CD4-positive, alpha-beta memory T cell (primary cell): ENCODE measurements at regions of chr16 and their contacts with region 1.

Region 1: GRCh38 chr16:401468-402348 is at the start of gene DECR2:
- DNase-seq: peak; percentile 92 to 96 (median 94)
- H3K4me3 ChIP-seq: peak within 1 kb of the TSS; percentile 61 to 68
- H3K4me3 Mint-ChIP-seq: peak within 1 kb of the TSS; percentile 88 to 94 (median 89)
- H3K27ac ChIP-seq: peak within 1 kb of the TSS; percentile 79
- H3K27ac Mint-ChIP-seq: peak within 1 kb of the TSS; percentile 88 to 96 (median 95)
- H3K4me1 ChIP-seq: peaks cover 13% of the 10 kb centered on the region
- H3K4me1 Mint-ChIP-seq: peaks cover 6 to 25% (median 11%) of the 10 kb centered on the region in 4 donors
- H3K27me3 ChIP-seq: no peaks in the 10 kb centered on the region
- H3K27me3 Mint-ChIP-seq: no peaks in the 10 kb centered on the region
- total RNA-seq, gene DECR2: 5.1 to 7.3 TPM

Region 2: DNA sequence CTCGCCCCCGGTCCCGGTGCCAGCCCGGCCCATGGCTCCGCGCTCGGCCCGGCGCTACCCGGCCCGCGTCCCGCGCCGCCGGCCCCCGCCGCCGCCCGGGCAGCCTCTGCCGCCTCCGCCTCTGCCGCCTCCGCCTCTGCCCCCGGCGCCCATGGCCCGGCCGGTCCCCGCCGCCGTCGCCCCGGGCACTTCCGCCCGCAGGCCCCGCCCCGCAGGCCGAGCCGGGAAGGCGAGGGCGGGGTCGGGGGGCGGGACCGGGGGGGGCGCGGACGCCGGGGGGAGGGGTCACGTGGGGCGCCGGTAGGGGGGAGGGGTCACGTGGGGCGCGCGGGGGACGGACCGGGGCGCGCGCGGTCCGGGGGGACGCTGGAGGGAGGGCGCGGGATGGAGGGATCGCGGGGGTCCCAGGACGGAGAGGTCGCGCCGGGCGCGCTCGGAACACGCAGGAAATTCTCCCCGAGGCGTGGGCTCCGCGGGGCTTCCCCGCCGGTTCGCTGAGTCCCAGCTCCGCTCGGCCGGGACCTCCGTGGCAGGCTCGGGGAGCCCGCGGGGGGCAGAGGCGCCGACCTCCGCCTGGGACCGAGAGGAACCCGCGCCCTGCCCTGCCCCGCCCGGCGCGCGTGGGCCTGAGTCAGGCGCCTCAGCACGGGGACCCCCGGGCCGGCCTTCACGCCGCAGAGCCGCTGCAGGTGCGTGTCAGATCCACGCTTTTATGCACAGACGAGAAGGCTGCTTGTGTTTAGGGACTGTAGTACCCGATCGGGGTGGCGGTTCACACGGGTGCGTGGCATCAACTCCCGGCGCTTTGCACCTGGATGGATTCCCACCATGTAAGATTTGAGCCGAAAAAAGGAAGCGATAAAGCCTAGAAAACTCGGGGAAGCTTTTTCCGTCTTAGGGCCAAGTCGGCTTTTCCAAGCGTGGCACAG is 19.7 kb before region 1 on chr16 and contains the start of gene PGAP6:
- CTCF ChIA-PET with region 1: no interaction called
- POLR2A ChIA-PET with region 1: interaction called, 35 read pairs
- intact Hi-C with region 1: loop called (anchors 1 kb)
- DNase-seq: peak in 4 of 5 donors; percentile 51 to 72 (median 62)
- H3K4me3 ChIP-seq: peak within 1 kb of the TSS; percentile 47 to 74
- H3K4me3 Mint-ChIP-seq: peak within 1 kb of the TSS; percentile 85 to 95 (median 93)
- H3K27ac ChIP-seq: peak within 1 kb of the TSS; percentile 59
- H3K27ac Mint-ChIP-seq: peak within 1 kb of the TSS; percentile 61 to 94 (median 88)
- H3K4me1 ChIP-seq: peaks cover 37% of the 10 kb centered on the region
- H3K4me1 Mint-ChIP-seq: peaks cover 10 to 31% (median 21%) of the 10 kb centered on the region in 4 donors
- H3K27me3 ChIP-seq: no peaks in the 10 kb centered on the region
- H3K27me3 Mint-ChIP-seq: no peaks in the 10 kb centered on the region
- total RNA-seq, gene PGAP6: 72.2 to 73.5 TPM

Region 3: GRCh38 chr16:425082-425718 is 23.5 kb after region 1 on chr16 and contains the start of gene RAB11FIP3:
- CTCF ChIA-PET with region 1: interaction called, 3 read pairs
- POLR2A ChIA-PET with region 1: interaction called, 24 read pairs
- intact Hi-C with region 1: loop called (anchors 1 kb)
- DNase-seq: peak; percentile 83 to 89 (median 86)
- H3K4me3 ChIP-seq: peak within 1 kb of the TSS; percentile 65 to 83
- H3K4me3 Mint-ChIP-seq: peak within 1 kb of the TSS; percentile 86 to 94 (median 90)
- H3K27ac ChIP-seq: peak within 1 kb of the TSS; percentile 80
- H3K27ac Mint-ChIP-seq: peak within 1 kb of the TSS; percentile 87 to 98 (median 93)
- H3K4me1 ChIP-seq: peaks cover 35% of the 10 kb centered on the region
- H3K4me1 Mint-ChIP-seq: peaks cover 20 to 41% (median 31%) of the 10 kb centered on the region in 4 donors
- H3K27me3 ChIP-seq: no peaks in the 10 kb centered on the region
- H3K27me3 Mint-ChIP-seq: no peaks in the 10 kb centered on the region
- total RNA-seq, gene RAB11FIP3: 41.8 to 42.6 TPM